HepG2 (cell line): ENCODE measurements at regions of chr13 and their contacts with region 1.

Region 1: DNA sequence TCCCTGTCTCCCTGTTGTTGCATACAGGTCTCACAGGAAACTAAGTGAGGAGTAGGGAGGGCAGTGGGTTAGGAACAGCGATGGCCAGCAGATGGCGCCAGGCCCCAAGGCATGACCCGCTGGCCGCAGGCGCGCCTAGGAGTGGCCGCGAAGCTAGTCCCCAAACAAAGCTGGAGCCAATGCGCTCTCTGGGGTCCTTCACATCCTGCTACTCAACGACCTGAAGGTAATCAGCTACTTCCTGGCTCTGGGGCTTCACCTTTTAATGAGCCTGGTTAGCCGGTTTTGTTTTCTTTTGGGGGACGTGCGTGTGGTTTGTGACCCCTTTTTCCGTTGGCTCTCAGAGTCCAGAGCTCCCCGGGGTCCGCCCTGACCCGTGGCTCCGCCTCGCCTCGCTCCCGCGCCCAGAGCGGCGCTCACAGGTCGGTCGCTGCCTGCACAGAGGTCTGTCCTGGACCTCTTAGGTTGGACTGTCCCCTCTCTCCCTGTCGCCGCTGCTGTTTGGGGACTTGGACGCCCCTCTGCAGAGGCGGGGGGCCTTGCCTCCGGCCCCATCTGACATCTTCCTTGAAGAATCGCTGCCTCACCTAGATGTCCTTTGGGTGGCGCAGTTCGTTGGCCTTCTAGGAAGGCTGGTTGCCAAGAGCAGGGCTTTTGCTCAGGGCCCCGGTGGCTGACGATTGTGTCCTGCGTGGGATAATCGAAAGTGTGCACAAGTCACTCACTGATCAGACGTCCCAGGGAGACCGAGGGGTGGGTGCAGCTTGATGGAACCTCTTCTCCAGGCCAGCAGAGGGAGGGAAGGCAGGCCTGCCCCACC is 62.1 kb upstream of the GTF3A start:
- DNase-seq: peak; percentile 68
- ATAC-seq: peak; percentile 98
- H3K4me3 ChIP-seq: peak overlapping the region; percentile 47 to 67 (median 47)
- H3K27ac ChIP-seq: no peak overlapping the region
- H3K4me1 ChIP-seq: peaks cover 12% of the 10 kb centered on the region
- H3K27me3 ChIP-seq: peaks cover 2 to 22% of the 10 kb centered on the region in 2 experiments; a peak in 3 of 5 replicates
- CTCF ChIP-seq: peak; percentile 98
- EP300 ChIP-seq: no peak
- POLR2A ChIP-seq: no peak
- RAD21 ChIP-seq: peak; percentile 92

Region 2: GRCh38 chr13:26946684-26947343 is 415.5 kb before region 1 on chr13:
- CTCF ChIA-PET with region 1: interaction called, 27 read pairs
- POLR2A ChIA-PET with region 1: no interaction called
- in situ Hi-C with region 1: loop called (anchors 5 kb)
- intact Hi-C with region 1: loop called (anchors 1 kb)
- DNase-seq: peak; percentile 64
- ATAC-seq: peak; percentile 80
- H3K4me3 ChIP-seq: no peak overlapping the region
- H3K27ac ChIP-seq: no peak overlapping the region
- H3K4me1 ChIP-seq: peaks cover 37% of the 10 kb centered on the region
- H3K27me3 ChIP-seq: no peaks in the 10 kb centered on the region
- CTCF ChIP-seq: peak; percentile 90
- EP300 ChIP-seq: no peak
- POLR2A ChIP-seq: no peak
- RAD21 ChIP-seq: peak; percentile 87

Region 3: GRCh38 chr13:27177852-27178251 is 184.4 kb before region 1 on chr13:
- CTCF ChIA-PET with region 1: no interaction called
- POLR2A ChIA-PET with region 1: no interaction called
- in situ Hi-C with region 1: no loop called
- intact Hi-C with region 1: loop called (anchors 5 kb)
- DNase-seq: no peak
- ATAC-seq: no peak
- H3K4me3 ChIP-seq: no peak overlapping the region
- H3K27ac ChIP-seq: no peak overlapping the region
- H3K4me1 ChIP-seq: peaks cover 7% of the 10 kb centered on the region
- H3K27me3 ChIP-seq: 0 out of 5 replicates have a peak, but pooled peaks cover 0 to 3% of the 10 kb centered on the region in 2 experiments
- CTCF ChIP-seq: no peak
- EP300 ChIP-seq: no peak
- POLR2A ChIP-seq: no peak
- RAD21 ChIP-seq: no peak

Region 4: GRCh38 chr13:27270594-27271520 is 91.4 kb before region 1 on chr13 and contains the start of gene RASL11A:
- CTCF ChIA-PET with region 1: no interaction called
- POLR2A ChIA-PET with region 1: no interaction called
- in situ Hi-C with region 1: no loop called
- intact Hi-C with region 1: loop called (anchors 5 kb)
- DNase-seq: peak; percentile 70
- ATAC-seq: peak; percentile 94
- H3K4me3 ChIP-seq: peak within 1 kb of the TSS; percentile 53 to 84 (median 76)
- H3K27ac ChIP-seq: peak within 1 kb of the TSS; percentile 41
- H3K4me1 ChIP-seq: peaks cover 15% of the 10 kb centered on the region
- H3K27me3 ChIP-seq: no peaks in the 10 kb centered on the region
- CTCF ChIP-seq: peak; percentile 87
- EP300 ChIP-seq: no peak
- POLR2A ChIP-seq: peak; percentile 68 to 78
- RAD21 ChIP-seq: peak; percentile 62
- total RNA-seq, gene RASL11A: 3.2 and 4.1 TPM in 2 replicates

Region 5: GRCh38 chr13:27415116-27415515 is 52.8 kb after region 1 on chr13:
- CTCF ChIA-PET with region 1: no interaction called
- POLR2A ChIA-PET with region 1: no interaction called
- in situ Hi-C with region 1: no loop called
- intact Hi-C with region 1: no loop called
- DNase-seq: no peak
- ATAC-seq: no peak
- H3K4me3 ChIP-seq: no peak overlapping the region
- H3K27ac ChIP-seq: no peak overlapping the region
- H3K4me1 ChIP-seq: 0 out of 2 replicates have a peak, but pooled peaks cover 5% of the 10 kb centered on the region
- H3K27me3 ChIP-seq: peaks cover 0 to 27% of the 10 kb centered on the region in 2 experiments; a peak in 1 of 5 replicates
- CTCF ChIP-seq: no peak
- EP300 ChIP-seq: no peak
- POLR2A ChIP-seq: no peak
- RAD21 ChIP-seq: no peak

Region 6: GRCh38 chr13:27510082-27510481 is 147.8 kb after region 1 on chr13:
- CTCF ChIA-PET with region 1: no interaction called
- POLR2A ChIA-PET with region 1: no interaction called
- in situ Hi-C with region 1: no loop called
- intact Hi-C with region 1: no loop called
- DNase-seq: no peak
- ATAC-seq: no peak
- H3K4me3 ChIP-seq: no peak overlapping the region
- H3K27ac ChIP-seq: no peak overlapping the region
- H3K4me1 ChIP-seq: no peaks in the 10 kb centered on the region
- H3K27me3 ChIP-seq: peaks cover 2 to 5% of the 10 kb centered on the region in 2 experiments; a peak in 1 of 5 replicates
- CTCF ChIP-seq: no peak
- EP300 ChIP-seq: no peak
- POLR2A ChIP-seq: no peak
- RAD21 ChIP-seq: no peak

Region 7: DNA sequence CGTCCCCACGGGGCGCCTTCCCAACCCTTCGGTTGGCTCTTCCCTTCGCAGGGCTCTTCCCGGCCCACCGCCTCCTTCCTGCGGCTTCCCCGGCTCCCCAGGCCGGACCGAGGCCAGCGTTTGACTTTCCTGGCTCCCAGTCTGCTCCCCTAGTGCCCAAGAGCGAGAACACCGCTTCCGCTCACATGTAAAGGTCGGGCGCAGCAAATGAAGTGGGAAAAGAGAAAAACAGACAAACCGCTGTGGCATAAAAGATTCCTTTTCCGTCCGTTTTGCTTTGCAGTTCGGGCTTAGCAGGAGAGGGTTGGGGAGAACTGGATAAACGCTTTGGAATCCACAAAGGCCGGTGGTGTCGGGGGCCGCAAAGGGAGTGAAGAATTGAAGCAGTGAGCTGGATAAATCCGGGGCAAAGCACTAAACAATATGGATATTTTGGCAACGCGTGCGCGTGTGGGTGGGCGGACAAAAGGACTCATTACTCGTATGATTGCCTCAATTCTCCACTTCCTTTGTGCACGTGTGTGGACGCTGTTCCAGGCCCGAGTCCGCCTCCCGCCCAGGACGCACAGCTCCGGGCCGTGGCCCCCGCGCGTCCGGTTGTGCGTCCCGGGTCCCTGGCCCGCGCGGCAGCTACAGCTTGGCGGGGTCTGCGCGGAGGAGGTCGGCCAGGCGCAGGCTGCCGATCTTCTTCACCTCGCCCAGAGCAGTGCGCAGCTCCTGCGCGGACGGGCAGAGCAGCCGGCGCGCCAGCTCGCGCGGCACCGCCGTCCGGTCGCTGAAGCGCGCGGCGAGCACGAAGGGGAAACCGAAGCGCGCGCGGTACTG is 615.4 kb after region 1 on chr13:
- CTCF ChIA-PET with region 1: interaction called, 3 read pairs
- POLR2A ChIA-PET with region 1: no interaction called
- in situ Hi-C with region 1: loop called (anchors 10 kb)
- intact Hi-C with region 1: no loop called
- DNase-seq: no peak
- ATAC-seq: peak; percentile 24; the same call in 2 of the 3 replicates
- H3K4me3 ChIP-seq: no peak overlapping the region
- H3K27ac ChIP-seq: no peak overlapping the region
- H3K4me1 ChIP-seq: peaks cover 13% of the 10 kb centered on the region
- H3K27me3 ChIP-seq: peaks cover 10 to 68% of the 10 kb centered on the region in 2 experiments
- CTCF ChIP-seq: no peak
- EP300 ChIP-seq: no peak
- POLR2A ChIP-seq: no peak
- RAD21 ChIP-seq: no peak